PC-3 (cell line): ENCODE measurements at regions of chrX and their contacts with region 1.

Region 1: GRCh38 chrX:87583679-87584078 is 66.1 kb downstream of the KLHL4 start:
- DNase-seq: peak; percentile 39
- ATAC-seq: no peak
- H3K4me3 ChIP-seq: no peak overlapping the region
- H3K27ac ChIP-seq: no peak overlapping the region
- H3K4me1 ChIP-seq: no peaks in the 10 kb centered on the region
- H3K27me3 ChIP-seq: no peaks in the 10 kb centered on the region
- CTCF ChIP-seq: peak; percentile 54

Region 2: DNA sequence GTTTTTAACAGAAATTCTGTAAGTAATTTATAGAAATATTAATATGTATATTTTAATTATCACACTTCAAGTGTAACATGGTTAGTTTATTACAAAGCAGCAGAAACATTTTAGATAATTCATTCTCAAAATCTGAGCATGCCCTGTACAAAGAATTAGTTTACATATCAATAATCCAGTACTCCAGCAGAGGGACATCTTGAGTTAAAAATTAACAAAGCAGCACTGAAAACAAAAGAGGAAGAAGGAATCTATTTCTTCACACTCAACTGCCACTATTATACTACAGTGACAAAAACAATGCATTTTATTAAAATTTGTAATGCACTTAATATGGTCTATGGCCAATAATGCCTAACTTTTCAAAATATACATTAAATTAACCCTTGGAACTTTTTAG is 245.2 kb before region 1 on chrX:
- CTCF ChIA-PET with region 1: interaction called, 3 read pairs
- POLR2A ChIA-PET with region 1: no interaction called
- intact Hi-C with region 1: loop called (anchors 2 kb)
- DNase-seq: peak; percentile 47
- ATAC-seq: peak; percentile 33; the same call in 1 of the 2 replicates
- H3K4me3 ChIP-seq: no peak overlapping the region
- H3K27ac ChIP-seq: no peak overlapping the region
- H3K4me1 ChIP-seq: no peaks in the 10 kb centered on the region
- H3K27me3 ChIP-seq: no peaks in the 10 kb centered on the region
- CTCF ChIP-seq: peak; percentile 53; the same call in 1 of the 2 replicates

Region 3: GRCh38 chrX:87397103-87397886 is 186.4 kb before region 1 on chrX:
- CTCF ChIA-PET with region 1: no interaction called
- POLR2A ChIA-PET with region 1: no interaction called
- intact Hi-C with region 1: loop called (anchors 10 kb)
- DNase-seq: peak; percentile 40
- ATAC-seq: peak; percentile 67
- H3K4me3 ChIP-seq: no peak overlapping the region
- H3K27ac ChIP-seq: no peak overlapping the region
- H3K4me1 ChIP-seq: peaks cover 4% of the 10 kb centered on the region; the same call in 1 of the 2 replicates
- H3K27me3 ChIP-seq: no peaks in the 10 kb centered on the region
- CTCF ChIP-seq: no peak

Region 4: GRCh38 chrX:87409113-87409841 is 174.4 kb before region 1 on chrX:
- CTCF ChIA-PET with region 1: no interaction called
- POLR2A ChIA-PET with region 1: no interaction called
- intact Hi-C with region 1: no loop called
- DNase-seq: peak; percentile 87
- ATAC-seq: peak; percentile 93
- H3K4me3 ChIP-seq: no peak overlapping the region
- H3K27ac ChIP-seq: peak overlapping the region; percentile 44; the same call in 1 of the 2 replicates
- H3K4me1 ChIP-seq: peaks cover 10% of the 10 kb centered on the region
- H3K27me3 ChIP-seq: no peaks in the 10 kb centered on the region
- CTCF ChIP-seq: no peak

Region 5: DNA sequence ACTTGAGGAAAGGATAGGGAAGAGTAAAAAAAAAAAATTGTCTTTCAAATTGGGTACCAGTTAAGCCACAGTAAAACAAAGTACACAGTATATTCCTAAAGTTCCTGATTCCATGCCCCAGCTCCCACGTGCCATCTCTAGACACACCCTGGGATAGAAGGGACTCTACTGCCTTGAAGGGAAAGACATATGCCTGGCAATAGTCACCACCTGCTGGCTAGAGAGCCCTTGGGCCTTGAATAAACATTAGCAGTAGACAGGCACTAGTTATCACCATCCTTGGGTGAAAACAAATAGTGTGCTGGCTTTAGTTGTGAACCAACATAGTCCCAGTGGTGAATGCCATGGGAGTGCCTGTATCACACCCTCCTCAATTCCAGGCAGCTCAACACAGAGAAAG is 21.2 kb before region 1 on chrX:
- CTCF ChIA-PET with region 1: no interaction called
- POLR2A ChIA-PET with region 1: no interaction called
- intact Hi-C with region 1: no loop called
- DNase-seq: peak; percentile 1
- ATAC-seq: peak; percentile 43; the same call in 1 of the 2 replicates
- H3K4me3 ChIP-seq: no peak overlapping the region
- H3K27ac ChIP-seq: no peak overlapping the region
- H3K4me1 ChIP-seq: no peaks in the 10 kb centered on the region
- H3K27me3 ChIP-seq: no peaks in the 10 kb centered on the region
- CTCF ChIP-seq: no peak

Region 6: GRCh38 chrX:87621697-87622096 is 38.0 kb after region 1 on chrX:
- CTCF ChIA-PET with region 1: interaction called, 12 read pairs
- POLR2A ChIA-PET with region 1: no interaction called
- intact Hi-C with region 1: no loop called
- DNase-seq: peak; percentile 7
- ATAC-seq: peak; percentile 38; the same call in 1 of the 2 replicates
- H3K4me3 ChIP-seq: no peak overlapping the region
- H3K27ac ChIP-seq: no peak overlapping the region
- H3K4me1 ChIP-seq: no peaks in the 10 kb centered on the region
- H3K27me3 ChIP-seq: no peaks in the 10 kb centered on the region
- CTCF ChIP-seq: no peak

Region 7: DNA sequence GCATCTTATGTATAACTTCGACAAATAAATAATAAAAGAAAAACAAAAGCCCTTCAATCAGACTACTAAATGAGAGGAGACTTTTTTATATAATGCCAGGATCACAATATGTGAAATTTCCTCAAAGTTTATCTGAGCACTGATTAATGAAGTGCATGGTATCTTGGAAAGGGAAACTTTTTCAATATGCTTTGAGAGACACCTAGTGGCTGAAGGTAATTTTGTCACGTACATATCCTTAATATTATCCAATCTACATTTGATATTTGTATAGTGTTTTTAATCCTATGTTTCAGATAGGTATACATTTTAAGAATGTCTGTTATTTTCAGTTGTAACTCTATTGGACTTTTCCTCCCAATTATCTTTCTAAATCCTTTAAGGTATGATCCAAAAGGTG is 80.7 kb after region 1 on chrX:
- CTCF ChIA-PET with region 1: no interaction called
- POLR2A ChIA-PET with region 1: no interaction called
- intact Hi-C with region 1: loop called (anchors 1 kb)
- DNase-seq: peak; percentile 57
- ATAC-seq: peak; percentile 65
- H3K4me3 ChIP-seq: no peak overlapping the region
- H3K27ac ChIP-seq: no peak overlapping the region
- H3K4me1 ChIP-seq: no peaks in the 10 kb centered on the region
- H3K27me3 ChIP-seq: no peaks in the 10 kb centered on the region
- CTCF ChIP-seq: peak; percentile 66